T-cell (primary cell): ENCODE measurements at regions of chr2 and their contacts with region 1.

Region 1: DNA sequence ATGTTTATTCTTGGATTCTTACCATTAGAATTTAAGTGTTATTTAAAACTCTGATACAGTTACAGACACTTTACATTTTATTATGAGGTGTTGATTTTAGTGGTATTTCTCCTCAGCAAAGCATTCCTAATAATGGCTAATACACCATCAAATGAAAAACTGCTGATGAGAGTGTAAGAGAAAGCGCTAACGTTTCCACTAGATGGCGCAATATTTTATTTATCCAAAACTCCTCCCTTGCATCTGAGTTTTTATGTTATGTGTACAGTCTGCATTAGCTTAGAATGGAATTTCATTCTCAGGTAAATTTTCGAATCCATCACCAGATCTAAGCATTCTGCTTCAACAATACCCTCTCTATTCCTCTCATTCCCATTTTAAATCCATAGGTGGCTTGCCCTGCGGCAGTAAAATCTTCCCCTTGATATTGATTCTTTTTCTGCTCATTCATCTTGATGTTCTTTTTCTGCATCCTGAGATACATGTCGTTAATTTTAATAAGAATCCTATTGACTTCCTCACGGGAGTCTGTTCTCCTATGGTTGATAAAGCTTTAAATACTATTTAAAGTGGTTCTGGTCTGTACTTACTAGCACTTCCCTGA is 53.9 kb downstream of the PRKRA start:
- DNase-seq: peak in 4 of 35 experiments; percentile 3 to 70 (median 8)
- ATAC-seq: peak in 3 of 4 experiments; percentile 47 to 63 (median 48)
- H3K4me3 ChIP-seq: no peak overlapping the region
- H3K4me3 Mint-ChIP-seq: no peak overlapping the region
- H3K27ac ChIP-seq: no peak overlapping the region
- H3K27ac Mint-ChIP-seq: no peak overlapping the region
- H3K4me1 ChIP-seq: no peaks in the 10 kb centered on the region
- H3K4me1 Mint-ChIP-seq: peaks cover 0 to 2% (median 0%) of the 10 kb centered on the region in 3 donors
- H3K27me3 ChIP-seq: no peaks in the 10 kb centered on the region
- H3K27me3 Mint-ChIP-seq: peaks cover 3% of the 10 kb centered on the region in 2 donors

Region 2: DNA sequence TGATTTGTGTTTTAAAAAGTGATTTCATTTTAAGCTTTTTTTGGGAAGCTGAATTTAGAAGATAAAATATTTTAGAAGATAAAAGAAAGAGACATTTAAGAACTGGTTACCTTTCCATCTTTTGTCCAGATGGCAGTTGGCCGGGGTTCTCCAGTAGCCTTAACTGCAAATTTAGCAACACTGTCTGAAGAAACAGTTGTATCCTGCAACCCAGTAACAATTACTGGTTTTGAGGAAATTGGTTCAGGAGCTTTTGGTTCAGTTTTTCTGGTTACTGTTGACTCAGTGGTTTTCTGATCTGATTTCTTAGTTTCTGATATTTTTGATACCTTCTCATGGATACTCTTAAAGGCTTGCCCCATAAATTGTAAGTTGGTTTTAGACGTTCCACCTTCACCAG is 133.0 kb after region 1 on chr2:
- CTCF ChIA-PET with region 1: interaction called in 1 of 2 experiments, 15 read pairs
- POLR2A ChIA-PET with region 1: no interaction called
- DNase-seq: no peak
- ATAC-seq: no peak
- H3K4me3 ChIP-seq: no peak overlapping the region
- H3K4me3 Mint-ChIP-seq: no peak overlapping the region
- H3K27ac ChIP-seq: no peak overlapping the region
- H3K27ac Mint-ChIP-seq: peak overlapping the region in 1 of 2 donors; percentile 7
- H3K4me1 ChIP-seq: no peaks in the 10 kb centered on the region
- H3K4me1 Mint-ChIP-seq: peaks cover 11 to 43% (median 38%) of the 10 kb centered on the region in 3 donors
- H3K27me3 ChIP-seq: no peaks in the 10 kb centered on the region
- H3K27me3 Mint-ChIP-seq: no peaks in the 10 kb centered on the region

Region 3: DNA sequence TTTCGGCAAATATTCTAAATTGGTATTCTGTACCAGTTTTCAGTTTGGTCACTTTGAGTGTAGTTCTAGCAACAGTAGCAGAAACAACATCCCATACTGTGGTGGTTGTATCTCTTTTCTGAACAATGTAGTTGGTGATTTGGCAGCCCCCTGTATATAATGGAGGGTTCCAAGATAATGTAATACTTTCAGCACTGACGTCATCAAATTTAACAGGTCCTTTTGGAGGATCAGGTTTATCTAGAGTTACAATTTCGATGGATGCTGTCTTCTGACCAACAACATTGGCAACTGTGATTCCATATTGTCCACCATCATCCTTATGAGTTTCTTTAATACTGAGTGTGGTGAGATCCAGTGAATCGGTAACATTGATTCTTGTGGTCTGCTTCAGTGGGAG is 171.1 kb after region 1 on chr2:
- CTCF ChIA-PET with region 1: no interaction called
- POLR2A ChIA-PET with region 1: no interaction called
- DNase-seq: no peak
- ATAC-seq: no peak
- H3K4me3 ChIP-seq: no peak overlapping the region
- H3K4me3 Mint-ChIP-seq: no peak overlapping the region
- H3K27ac ChIP-seq: no peak overlapping the region
- H3K27ac Mint-ChIP-seq: no peak overlapping the region
- H3K4me1 ChIP-seq: no peaks in the 10 kb centered on the region
- H3K4me1 Mint-ChIP-seq: no peaks in the 10 kb centered on the region
- H3K27me3 ChIP-seq: no peaks in the 10 kb centered on the region
- H3K27me3 Mint-ChIP-seq: no peaks in the 10 kb centered on the region

Region 4: GRCh38 chr2:179037807-179038206 is 640.7 kb after region 1 on chr2:
- CTCF ChIA-PET with region 1: interaction called in 1 of 2 experiments, 12 read pairs
- POLR2A ChIA-PET with region 1: no interaction called
- DNase-seq: no peak
- ATAC-seq: no peak
- H3K4me3 ChIP-seq: no peak overlapping the region
- H3K4me3 Mint-ChIP-seq: no peak overlapping the region
- H3K27ac ChIP-seq: no peak overlapping the region
- H3K27ac Mint-ChIP-seq: peak overlapping the region in 1 of 2 donors; percentile 44
- H3K4me1 ChIP-seq: peaks cover 2 to 3% of the 10 kb centered on the region in 2 experiments
- H3K4me1 Mint-ChIP-seq: peaks cover 17 to 37% (median 25%) of the 10 kb centered on the region in 3 donors
- H3K27me3 ChIP-seq: no peaks in the 10 kb centered on the region
- H3K27me3 Mint-ChIP-seq: no peaks in the 10 kb centered on the region